Calu3 (cell line): ENCODE measurements at regions of chr3 and their contacts with region 1.

Region 1: DNA sequence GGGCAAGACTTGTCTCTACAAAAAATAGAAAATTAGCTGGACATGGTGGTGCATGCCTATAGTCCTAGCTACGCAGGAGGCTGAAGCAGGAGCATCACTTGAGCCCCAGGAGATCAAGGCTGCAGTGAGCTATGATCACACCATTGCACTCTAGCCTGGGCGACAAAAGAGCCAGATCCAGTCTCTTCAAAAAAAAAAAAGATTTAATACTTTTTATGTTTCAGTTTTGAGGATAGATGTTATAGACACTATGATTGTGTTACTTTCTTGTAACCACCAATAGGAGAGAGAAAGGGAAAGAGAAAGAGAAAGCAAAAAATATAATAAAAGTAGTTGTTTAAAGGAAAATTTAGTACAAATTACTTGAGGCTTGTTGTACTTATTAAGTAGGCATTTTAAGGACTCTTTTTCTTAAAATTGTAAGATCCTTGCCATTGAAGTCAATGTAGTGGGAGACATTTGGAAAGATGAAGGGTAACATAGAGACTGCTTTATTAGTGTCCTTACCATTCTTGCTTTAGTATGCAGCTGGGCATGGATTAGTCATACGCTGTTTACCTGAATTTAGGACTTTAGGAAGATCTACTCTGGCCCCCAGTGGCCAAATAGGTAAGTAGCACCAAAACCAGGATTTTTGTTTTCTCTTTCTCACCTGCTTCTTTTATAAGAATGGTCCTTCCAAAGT is 35.1 kb upstream of the ZDHHC23 start:
- DNase-seq: peak; percentile 39
- H3K4me3 Mint-ChIP-seq: no peak overlapping the region
- H3K27ac Mint-ChIP-seq: no peak overlapping the region
- H3K4me1 Mint-ChIP-seq: no peaks in the 10 kb centered on the region
- H3K27me3 Mint-ChIP-seq: no peaks in the 10 kb centered on the region
- CTCF ChIP-seq: peak; percentile 31

Region 2: DNA sequence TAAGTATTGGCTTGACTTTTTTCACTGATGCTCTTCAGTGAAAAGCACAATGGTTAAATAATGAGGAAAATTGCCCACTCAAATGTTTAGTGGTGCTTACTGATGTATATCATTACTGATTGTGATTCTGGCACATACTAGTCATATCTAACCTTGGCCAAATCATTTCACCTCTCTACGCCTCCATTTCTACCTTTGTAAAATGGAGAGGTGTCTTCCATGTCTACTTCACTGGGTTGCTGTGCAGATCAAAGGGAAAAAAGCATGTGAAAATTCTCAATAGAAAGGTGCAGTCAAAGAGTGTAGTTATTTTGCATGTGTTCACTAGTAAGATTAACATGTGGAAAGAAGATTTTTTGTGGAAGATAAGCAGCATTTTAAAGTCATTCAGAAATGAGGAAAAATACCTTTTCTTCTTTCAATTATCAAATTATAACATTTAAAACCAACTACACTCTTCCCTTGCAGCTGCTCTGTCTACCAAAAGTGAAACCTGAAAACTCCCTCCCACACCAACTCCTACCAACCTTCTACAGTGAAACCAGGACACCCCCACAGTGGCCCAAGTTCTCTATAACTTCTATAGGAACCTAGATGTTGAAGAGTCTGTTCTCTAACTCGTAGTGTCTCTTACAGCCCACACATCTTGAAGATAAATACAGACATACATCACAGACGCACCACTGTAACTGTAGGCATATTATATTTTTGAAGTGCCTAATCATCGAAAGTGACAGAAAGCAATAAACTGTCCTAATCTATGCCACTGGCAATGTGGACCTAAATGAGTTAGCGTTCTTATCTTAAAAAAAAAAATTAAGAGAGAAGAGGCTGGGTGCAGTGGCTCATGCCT is 939.1 kb before region 1 on chr3:
- CTCF ChIA-PET with region 1: no interaction called
- intact Hi-C with region 1: no loop called
- DNase-seq: no peak
- H3K4me3 Mint-ChIP-seq: no peak overlapping the region
- H3K27ac Mint-ChIP-seq: no peak overlapping the region
- H3K4me1 Mint-ChIP-seq: no peaks in the 10 kb centered on the region
- H3K27me3 Mint-ChIP-seq: peaks cover 14% of the 10 kb centered on the region
- CTCF ChIP-seq: no peak

Region 3: DNA sequence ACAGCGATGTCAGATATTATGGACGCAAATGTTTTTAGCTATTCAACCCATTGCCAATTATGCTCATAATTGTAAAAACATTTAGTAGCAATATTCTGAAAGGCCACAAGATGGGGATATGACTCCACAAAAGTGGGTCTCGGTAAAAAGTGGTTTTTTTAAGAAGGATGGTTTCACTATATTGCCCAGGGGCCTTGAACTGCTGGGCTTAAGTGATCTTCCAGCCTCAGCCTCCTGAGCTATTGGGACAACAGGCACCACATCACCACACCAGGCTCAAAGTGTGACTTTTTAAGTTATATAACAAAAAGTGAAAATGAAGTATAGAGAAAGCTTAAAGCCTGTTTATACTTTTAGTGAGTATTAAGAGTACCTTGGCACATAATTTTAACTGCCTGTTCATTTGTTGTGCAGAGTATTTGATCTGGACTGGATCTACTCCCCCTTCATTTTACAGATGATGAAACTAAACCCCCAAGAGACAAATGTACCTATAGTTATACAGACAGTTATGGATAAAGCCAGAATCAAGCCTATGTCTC is 176.1 kb before region 1 on chr3:
- CTCF ChIA-PET with region 1: interaction called, 4 read pairs
- intact Hi-C with region 1: loop called (anchors 1 kb)
- DNase-seq: no peak
- H3K4me3 Mint-ChIP-seq: no peak overlapping the region
- H3K27ac Mint-ChIP-seq: no peak overlapping the region
- H3K4me1 Mint-ChIP-seq: peaks cover 9% of the 10 kb centered on the region
- H3K27me3 Mint-ChIP-seq: no peaks in the 10 kb centered on the region
- CTCF ChIP-seq: peak; percentile 28

Region 4: GRCh38 chr3:113844622-113845222 is 68.0 kb before region 1 on chr3:
- CTCF ChIA-PET with region 1: interaction called, 25 read pairs
- intact Hi-C with region 1: loop called (anchors 1 kb)
- DNase-seq: no peak
- H3K4me3 Mint-ChIP-seq: no peak overlapping the region
- H3K27ac Mint-ChIP-seq: no peak overlapping the region
- H3K4me1 Mint-ChIP-seq: peaks cover 11% of the 10 kb centered on the region
- H3K27me3 Mint-ChIP-seq: no peaks in the 10 kb centered on the region
- CTCF ChIP-seq: no peak

Region 5: GRCh38 chr3:113890256-113890900 is 22.3 kb before region 1 on chr3:
- CTCF ChIA-PET with region 1: no interaction called
- intact Hi-C with region 1: no loop called
- DNase-seq: peak; percentile 27
- H3K4me3 Mint-ChIP-seq: no peak overlapping the region
- H3K27ac Mint-ChIP-seq: no peak overlapping the region
- H3K4me1 Mint-ChIP-seq: no peaks in the 10 kb centered on the region
- H3K27me3 Mint-ChIP-seq: no peaks in the 10 kb centered on the region
- CTCF ChIP-seq: no peak

Region 6: DNA sequence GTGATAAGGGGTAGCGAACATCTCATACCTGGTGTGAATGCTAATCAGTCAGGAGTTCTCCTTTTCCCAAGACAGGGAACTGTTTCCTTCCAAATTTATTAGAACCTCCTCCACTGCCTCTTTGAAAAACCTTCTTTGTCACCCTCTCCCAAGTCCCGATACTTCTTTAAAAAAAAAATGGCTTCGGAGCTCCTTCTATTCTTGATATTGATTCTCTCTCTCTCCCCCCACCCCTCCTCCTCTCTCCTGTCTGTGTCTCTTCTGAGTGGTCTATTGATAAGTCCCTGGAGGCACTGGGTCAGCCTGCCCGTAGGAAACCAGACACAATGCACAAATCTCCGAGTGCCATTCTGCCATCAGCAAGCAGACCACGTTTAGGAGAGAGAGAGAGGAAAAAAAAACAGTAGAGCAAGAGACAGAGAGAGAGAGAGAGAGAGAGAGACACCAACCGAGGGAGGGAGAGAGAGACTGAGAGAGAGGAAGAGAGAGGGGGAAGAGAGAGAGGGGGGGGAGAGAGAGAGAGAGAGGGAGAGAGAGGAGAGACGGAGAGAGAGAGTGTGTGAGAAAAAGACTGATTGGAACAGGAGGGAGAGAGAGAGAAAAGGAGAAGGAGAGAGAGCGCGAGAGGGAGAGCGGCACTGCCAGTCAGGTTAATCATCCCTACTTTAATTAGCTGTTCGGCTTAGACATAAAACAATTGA is 542.0 kb after region 1 on chr3:
- CTCF ChIA-PET with region 1: no interaction called
- intact Hi-C with region 1: no loop called
- DNase-seq: no peak
- H3K4me3 Mint-ChIP-seq: no peak overlapping the region
- H3K27ac Mint-ChIP-seq: no peak overlapping the region
- H3K4me1 Mint-ChIP-seq: peaks cover 24% of the 10 kb centered on the region
- H3K27me3 Mint-ChIP-seq: no peaks in the 10 kb centered on the region
- CTCF ChIP-seq: no peak